ENCODE measurements at regions of chr7 and their contacts with region 1.

Region 1: DNA sequence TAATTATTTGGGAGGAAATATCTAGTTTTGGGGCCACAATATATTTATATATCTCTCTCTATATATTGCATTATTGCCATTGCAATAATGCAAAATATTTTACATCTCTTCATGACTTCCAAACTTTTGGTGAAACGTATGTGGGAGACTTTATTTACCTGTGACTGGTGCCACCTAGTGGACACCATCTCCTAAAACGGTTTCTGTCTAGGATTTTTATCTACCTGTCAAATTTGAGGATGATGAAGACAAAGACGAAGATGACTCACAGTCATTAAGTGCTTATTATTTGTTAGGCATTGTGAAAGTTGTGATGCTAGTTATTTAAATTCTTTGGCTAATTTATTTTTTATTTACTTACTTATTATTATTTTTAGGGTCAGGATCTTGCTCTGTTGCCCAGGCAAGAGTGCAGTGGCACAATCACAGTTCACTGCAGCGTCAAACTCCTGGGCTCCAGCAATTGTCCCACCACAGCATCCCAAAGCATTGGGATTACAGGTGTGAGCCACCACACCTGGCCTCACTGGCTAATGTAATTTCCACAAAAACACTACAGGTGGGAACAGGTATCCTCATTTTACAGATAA is 18.7 kb upstream of the CBLL1 start:
- DNase-seq: no peak
- ATAC-seq: no peak
- H3K4me3 ChIP-seq: no peak overlapping the region
- H3K27ac ChIP-seq: no peak overlapping the region
- H3K4me1 ChIP-seq: no peaks in the 10 kb centered on the region
- H3K27me3 ChIP-seq: no peaks in the 10 kb centered on the region
- CTCF ChIP-seq: peak; percentile 53 to 71 (median 58)
- POLR2A ChIP-seq: no peak

Region 2: DNA sequence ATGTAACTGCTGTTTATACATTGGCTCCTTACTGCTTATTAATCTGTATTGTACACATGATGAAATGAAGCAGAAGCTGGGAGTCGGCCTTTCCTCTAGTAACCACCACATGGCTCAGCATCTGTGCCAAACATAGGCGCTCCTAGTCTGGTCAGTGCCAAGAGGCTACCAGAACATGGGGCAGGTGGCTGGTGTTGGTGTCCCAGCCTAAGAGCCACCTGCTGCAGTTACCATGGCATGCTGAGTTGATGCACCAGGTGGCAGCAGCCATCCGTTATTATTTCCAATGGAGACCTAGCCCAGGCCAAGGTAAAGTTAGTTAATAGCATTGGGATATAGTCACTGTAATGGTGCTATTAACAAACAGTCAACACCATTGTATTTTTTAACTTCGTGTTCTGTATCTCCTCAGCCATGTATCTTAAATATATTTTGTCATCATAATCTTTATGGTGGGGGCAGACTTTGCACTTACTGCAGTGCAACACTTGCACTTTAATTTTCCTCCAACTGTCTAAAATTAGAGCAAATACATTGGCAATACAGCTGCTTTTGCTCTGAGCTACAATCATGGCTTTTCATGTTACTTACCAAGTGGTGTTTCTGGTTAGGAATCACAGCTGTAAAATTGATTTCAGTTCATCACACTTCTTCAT is 523.3 kb before region 1 on chr7:
- in situ Hi-C with region 1: loop called in 3 of 4 experiments (anchors 25 kb)
- intact Hi-C with region 1: loop called (anchors 5 kb)
- DNase-seq: peak; percentile 69 to 87
- ATAC-seq: peak; percentile 92 to 97
- H3K4me3 ChIP-seq: no peak overlapping the region
- H3K27ac ChIP-seq: peak overlapping the region; percentile 8 to 62 (median 28)
- H3K4me1 ChIP-seq: peaks cover 0 to 10% of the 10 kb centered on the region in 2 donors
- H3K27me3 ChIP-seq: no peaks in the 10 kb centered on the region
- CTCF ChIP-seq: peak; percentile 41 to 74 (median 55)
- POLR2A ChIP-seq: no peak

Region 3: GRCh38 chr7:107450970-107451369 is 274.3 kb before region 1 on chr7:
- in situ Hi-C with region 1: loop called in 1 of 4 experiments (anchors 10 kb)
- intact Hi-C with region 1: no loop called
- DNase-seq: no peak
- ATAC-seq: no peak
- H3K4me3 ChIP-seq: no peak overlapping the region
- H3K27ac ChIP-seq: no peak overlapping the region
- H3K4me1 ChIP-seq: no peaks in the 10 kb centered on the region
- H3K27me3 ChIP-seq: no peaks in the 10 kb centered on the region
- CTCF ChIP-seq: no peak
- POLR2A ChIP-seq: no peak

Region 4: GRCh38 chr7:107462740-107463444 is 262.4 kb before region 1 on chr7:
- in situ Hi-C with region 1: loop called (anchors 5 to 10 kb)
- intact Hi-C with region 1: loop called (anchors 1 kb)
- DNase-seq: peak; percentile 10 to 57
- ATAC-seq: peak; percentile 82 to 94
- H3K4me3 ChIP-seq: no peak overlapping the region
- H3K27ac ChIP-seq: no peak overlapping the region
- H3K4me1 ChIP-seq: no peaks in the 10 kb centered on the region
- H3K27me3 ChIP-seq: no peaks in the 10 kb centered on the region
- CTCF ChIP-seq: peak; percentile 55 to 72 (median 65)
- POLR2A ChIP-seq: no peak

Region 5: DNA sequence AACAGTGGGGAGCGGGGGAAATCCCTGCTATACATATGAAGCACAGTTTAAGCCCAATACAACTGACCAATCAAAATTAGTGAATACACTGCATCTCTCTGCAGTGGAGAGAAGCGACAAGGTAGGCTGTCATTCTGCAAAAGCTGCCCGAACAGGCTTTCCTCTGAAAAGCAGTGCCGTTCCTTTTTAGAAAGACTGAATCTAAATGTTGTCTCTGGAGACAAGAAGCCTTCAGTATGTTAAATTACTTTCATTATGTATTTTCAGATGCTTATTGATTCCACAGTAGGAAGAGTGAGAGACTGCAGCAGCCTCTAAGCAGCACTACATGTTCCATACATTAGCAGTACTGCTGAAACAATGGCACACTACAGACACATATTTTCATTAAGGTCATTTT is 255.3 kb before region 1 on chr7 and contains the start of gene GPR22:
- in situ Hi-C with region 1: loop called in 3 of 4 experiments (anchors 5 kb)
- intact Hi-C with region 1: no loop called
- DNase-seq: no peak
- ATAC-seq: no peak
- H3K4me3 ChIP-seq: no peak within 1 kb of the TSS
- H3K27ac ChIP-seq: no peak within 1 kb of the TSS
- H3K4me1 ChIP-seq: peaks cover 0 to 4% of the 10 kb centered on the region in 2 donors
- H3K27me3 ChIP-seq: no peaks in the 10 kb centered on the region
- CTCF ChIP-seq: no peak
- POLR2A ChIP-seq: no peak
- total RNA-seq, gene GPR22: not detected

Measured in gastrocnemius medialis (tissue), 4 donors.